GM12878 (cell line): ENCODE measurements at regions of chr2 and their contacts with region 1.

Region 1: DNA sequence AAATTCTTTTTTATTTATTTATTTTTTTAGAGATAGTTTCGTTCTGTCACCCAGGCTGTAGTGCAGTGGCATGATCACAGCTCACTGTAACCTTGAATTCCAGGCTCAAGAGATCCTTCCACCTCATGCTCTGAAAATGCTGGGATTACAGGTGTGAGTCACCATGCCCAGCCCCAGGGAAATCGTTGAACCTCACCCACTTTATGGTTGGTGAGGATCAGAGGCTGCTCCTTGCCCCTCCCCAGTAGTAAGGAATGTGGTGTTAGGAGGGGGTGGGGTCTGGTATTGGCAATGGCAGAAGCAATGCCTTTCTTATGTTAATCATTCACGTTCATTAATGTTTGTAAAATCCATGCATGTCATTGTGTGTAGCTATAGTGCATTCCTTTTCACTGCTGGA is 161.9 kb downstream of the SUCLG1 start:
- DNase-seq: no peak
- ATAC-seq: no peak
- H3K4me3 ChIP-seq: no peak overlapping the region
- H3K27ac ChIP-seq: no peak overlapping the region
- H3K4me1 ChIP-seq: no peaks in the 10 kb centered on the region
- H3K27me3 ChIP-seq: 0 out of 4 replicates have a peak, but pooled peaks cover 0 to 3% of the 10 kb centered on the region in 2 experiments
- CTCF ChIP-seq: no peak
- EP300 ChIP-seq: no peak
- POLR2A ChIP-seq: no peak
- RAD21 ChIP-seq: no peak

Region 2: GRCh38 chr2:83471655-83472054 is 825.5 kb before region 1 on chr2:
- CTCF ChIA-PET with region 1: no interaction called
- POLR2A ChIA-PET with region 1: no interaction called
- RAD21 ChIA-PET with region 1: no interaction called
- SMC1A ChIA-PET with region 1: no interaction called
- in situ Hi-C with region 1: no loop called
- intact Hi-C with region 1: no loop called
- DNase-seq: no peak
- ATAC-seq: no peak
- H3K4me3 ChIP-seq: no peak overlapping the region
- H3K27ac ChIP-seq: no peak overlapping the region
- H3K4me1 ChIP-seq: no peaks in the 10 kb centered on the region
- H3K27me3 ChIP-seq: no peaks in the 10 kb centered on the region
- CTCF ChIP-seq: no peak
- EP300 ChIP-seq: no peak
- POLR2A ChIP-seq: no peak
- RAD21 ChIP-seq: no peak

Region 3: GRCh38 chr2:84033347-84033974 is 263.7 kb before region 1 on chr2:
- CTCF ChIA-PET with region 1: no interaction called
- POLR2A ChIA-PET with region 1: no interaction called
- RAD21 ChIA-PET with region 1: no interaction called
- SMC1A ChIA-PET with region 1: no interaction called
- in situ Hi-C with region 1: loop called (anchors 5 kb)
- intact Hi-C with region 1: no loop called
- DNase-seq: no peak
- ATAC-seq: 0 out of 3 replicates have a peak, but pooled peaks have one; percentile 20
- H3K4me3 ChIP-seq: no peak overlapping the region
- H3K27ac ChIP-seq: no peak overlapping the region
- H3K4me1 ChIP-seq: no peaks in the 10 kb centered on the region
- H3K27me3 ChIP-seq: no peaks in the 10 kb centered on the region
- CTCF ChIP-seq: no peak
- EP300 ChIP-seq: no peak
- POLR2A ChIP-seq: no peak
- RAD21 ChIP-seq: no peak

Region 4: DNA sequence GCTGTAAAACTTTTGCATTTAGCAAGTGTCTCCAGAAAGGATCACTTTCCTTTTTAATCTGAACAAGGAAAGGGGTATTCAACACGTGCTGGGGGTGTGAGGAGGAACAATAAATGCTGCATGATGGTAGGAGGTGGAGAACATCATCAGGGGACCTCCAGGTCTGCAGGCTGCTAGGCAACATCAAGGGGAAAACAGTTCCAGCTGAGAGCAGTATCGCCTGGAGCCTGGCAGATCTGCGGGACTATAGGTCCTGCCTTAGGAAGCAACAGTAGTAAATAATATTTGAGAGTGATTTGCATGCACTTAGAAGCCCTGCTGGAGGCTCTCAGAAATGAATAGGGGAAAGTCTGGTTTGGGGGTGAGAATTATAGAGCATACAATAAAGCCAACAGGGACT is 13.6 kb before region 1 on chr2:
- CTCF ChIA-PET with region 1: no interaction called
- POLR2A ChIA-PET with region 1: no interaction called
- RAD21 ChIA-PET with region 1: no interaction called
- SMC1A ChIA-PET with region 1: no interaction called
- in situ Hi-C with region 1: no loop called
- intact Hi-C with region 1: no loop called
- DNase-seq: no peak
- ATAC-seq: no peak
- H3K4me3 ChIP-seq: no peak overlapping the region
- H3K27ac ChIP-seq: no peak overlapping the region
- H3K4me1 ChIP-seq: no peaks in the 10 kb centered on the region; the same call in 1 of the 2 replicates
- H3K27me3 ChIP-seq: no peaks in the 10 kb centered on the region; a peak in 1 of 4 replicates
- CTCF ChIP-seq: no peak
- EP300 ChIP-seq: no peak
- POLR2A ChIP-seq: no peak
- RAD21 ChIP-seq: no peak